Dendritic cell treated with granulocyte-macrophage colony-stimulating factor and Interleukin-4, amounts not matched to agents 40 ng/mL and 50 ng/mL, for 4 days (primary cell): ENCODE measurements at regions of chrX and their contacts with region 1.

Region 1: GRCh38 chrX:129726307-129727111 is 12.3 kb upstream of the XPNPEP2 start:
- H3K4me3 Mint-ChIP-seq: no peak overlapping the region
- H3K27ac Mint-ChIP-seq: no peak overlapping the region
- H3K4me1 Mint-ChIP-seq: peaks cover 33% of the 10 kb centered on the region
- H3K27me3 Mint-ChIP-seq: peaks cover 7% of the 10 kb centered on the region

Region 2: DNA sequence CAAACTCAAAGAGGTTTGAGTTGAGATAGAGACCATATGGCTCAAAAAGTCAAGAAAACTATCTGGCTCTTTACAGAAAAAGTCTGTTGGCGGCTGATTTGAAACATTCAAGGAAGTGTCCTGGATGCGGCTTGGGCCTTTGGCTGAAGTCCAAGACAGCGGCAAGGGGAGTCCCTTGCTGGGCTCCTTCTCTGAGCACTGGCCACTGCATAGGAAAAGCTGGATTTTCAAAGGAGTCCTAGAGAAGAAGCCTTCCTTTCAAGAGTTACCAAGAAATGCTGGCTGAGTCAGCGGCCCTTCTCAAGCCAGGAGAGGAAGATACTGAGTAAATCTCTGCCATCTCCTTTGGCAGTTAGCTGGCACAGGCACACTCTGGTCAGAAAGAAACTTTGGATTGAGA is 83.9 kb before region 1 on chrX:
- intact Hi-C with region 1: loop called (anchors 10 kb)
- H3K4me3 Mint-ChIP-seq: no peak overlapping the region
- H3K27ac Mint-ChIP-seq: no peak overlapping the region
- H3K4me1 Mint-ChIP-seq: peaks cover 22% of the 10 kb centered on the region
- H3K27me3 Mint-ChIP-seq: peaks cover 7% of the 10 kb centered on the region

Region 3: GRCh38 chrX:129655863-129656249 is 70.7 kb before region 1 on chrX:
- intact Hi-C with region 1: no loop called
- H3K4me3 Mint-ChIP-seq: no peak overlapping the region
- H3K27ac Mint-ChIP-seq: no peak overlapping the region
- H3K4me1 Mint-ChIP-seq: peaks cover 27% of the 10 kb centered on the region
- H3K27me3 Mint-ChIP-seq: peaks cover 47% of the 10 kb centered on the region

Region 4: DNA sequence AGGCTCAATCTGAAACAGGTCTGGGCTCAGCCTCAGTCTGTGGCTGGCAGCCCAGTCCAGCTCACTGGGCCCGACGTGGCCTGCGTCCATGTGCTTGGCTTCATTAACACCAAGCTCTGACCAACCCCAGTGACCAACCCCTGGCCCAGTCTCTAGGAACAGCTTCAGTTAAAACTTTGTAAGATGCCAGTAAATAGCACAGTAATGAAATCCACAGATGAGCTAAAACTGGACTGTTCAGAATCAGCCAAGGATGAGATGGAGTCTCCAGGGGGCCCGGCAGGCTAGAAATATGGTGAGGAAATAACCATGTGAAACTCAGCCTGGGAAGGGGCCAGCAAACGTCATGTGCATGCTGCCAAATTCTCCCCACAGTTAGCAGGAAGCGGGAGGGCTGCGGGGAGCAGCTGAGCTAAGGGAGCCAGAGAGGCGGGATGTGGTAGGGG is 24.9 kb before region 1 on chrX:
- intact Hi-C with region 1: no loop called
- H3K4me3 Mint-ChIP-seq: no peak overlapping the region
- H3K27ac Mint-ChIP-seq: no peak overlapping the region
- H3K4me1 Mint-ChIP-seq: no peaks in the 10 kb centered on the region
- H3K27me3 Mint-ChIP-seq: peaks cover 1% of the 10 kb centered on the region

Region 5: DNA sequence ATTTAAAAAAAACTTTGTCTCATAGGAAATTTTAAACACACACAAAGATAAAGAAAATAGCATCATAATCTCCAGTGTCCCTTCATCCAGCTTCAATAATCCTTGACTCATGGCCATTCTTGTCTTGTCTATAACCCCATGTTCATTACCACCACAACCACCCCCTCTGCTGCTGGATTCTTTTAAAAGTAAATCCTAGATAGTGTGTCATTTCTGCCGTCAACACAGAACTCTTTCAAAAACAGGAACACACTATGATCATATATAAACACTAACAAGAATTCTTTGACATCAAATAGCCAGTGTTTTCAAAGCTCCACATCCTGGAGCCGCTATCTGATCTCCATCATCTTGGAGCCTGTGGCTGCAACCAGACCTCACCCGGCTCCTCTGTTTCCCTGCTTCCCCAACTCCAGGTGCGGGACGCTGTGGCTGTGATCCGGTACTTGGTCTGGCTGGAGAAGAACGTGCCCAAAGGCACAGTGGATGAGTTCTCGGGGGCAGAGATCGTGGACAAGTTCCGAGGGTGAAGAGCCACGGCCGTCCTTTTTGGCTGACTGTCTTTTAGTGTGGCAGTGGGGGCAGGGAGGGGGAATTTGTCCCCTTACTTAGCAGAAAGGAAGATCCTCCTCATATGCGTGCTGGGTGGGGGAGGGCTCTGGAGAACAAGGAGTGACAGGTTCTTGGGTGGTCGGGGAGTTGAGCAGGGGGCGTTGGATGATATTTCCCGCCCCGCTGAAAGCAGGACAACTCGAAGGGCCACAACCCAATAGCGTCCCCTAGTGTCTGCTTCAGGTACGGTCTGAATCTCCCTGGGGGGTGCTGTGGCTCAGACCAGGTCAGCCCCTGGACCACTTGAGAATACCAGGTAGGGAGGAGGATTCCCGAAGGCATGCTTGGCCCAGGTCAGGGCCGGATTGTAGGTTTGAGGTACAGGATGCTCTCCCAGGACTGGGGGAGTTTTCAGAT is 27.8 kb after region 1 on chrX:
- intact Hi-C with region 1: loop called (anchors 1 kb)
- H3K4me3 Mint-ChIP-seq: peak overlapping the region; percentile 67
- H3K27ac Mint-ChIP-seq: peak overlapping the region; percentile 88
- H3K4me1 Mint-ChIP-seq: peaks cover 82% of the 10 kb centered on the region
- H3K27me3 Mint-ChIP-seq: no peaks in the 10 kb centered on the region

Region 6: DNA sequence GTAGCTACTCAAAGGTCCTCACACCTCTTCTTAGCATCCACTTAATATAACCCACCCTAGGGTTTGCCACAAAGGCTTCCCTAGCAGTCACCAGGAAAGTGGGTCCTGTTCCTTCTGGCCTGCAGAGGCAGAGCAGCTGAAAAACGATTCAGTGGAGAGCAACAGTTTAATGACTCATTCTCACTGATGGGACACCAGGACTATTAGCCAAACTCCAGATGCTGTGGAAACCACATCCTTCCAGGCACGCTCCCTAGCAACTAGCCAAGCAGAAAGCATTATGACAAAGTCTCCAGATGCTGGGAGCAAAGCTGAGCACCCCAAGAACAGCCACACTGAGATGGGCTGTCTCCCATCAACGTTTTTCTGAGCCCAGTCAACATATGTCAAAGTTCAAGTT is 149.2 kb after region 1 on chrX:
- intact Hi-C with region 1: no loop called
- H3K4me3 Mint-ChIP-seq: no peak overlapping the region
- H3K27ac Mint-ChIP-seq: no peak overlapping the region
- H3K4me1 Mint-ChIP-seq: no peaks in the 10 kb centered on the region
- H3K27me3 Mint-ChIP-seq: no peaks in the 10 kb centered on the region